ENCODE measurements at regions of chr22 and their contacts with region 1.

Region 1: GRCh38 chr22:31290494-31291471 is 1.5 kb downstream of the PIK3IP1 start:
- DNase-seq: peak; percentile 96 to 97
- H3K4me3 ChIP-seq: peak overlapping the region; percentile 66 to 85
- H3K27ac ChIP-seq: peak overlapping the region; percentile 85 to 95
- H3K4me1 ChIP-seq: peaks cover 0 to 53% (median 31%) of the 10 kb centered on the region in 4 donors
- H3K27me3 ChIP-seq: no peaks in the 10 kb centered on the region
- CTCF ChIP-seq: no peak

Region 2: GRCh38 chr22:29987137-29987536 is 1303.6 kb before region 1 on chr22:
- intact Hi-C with region 1: loop called (anchors 5 kb)
- DNase-seq: no peak
- H3K4me3 ChIP-seq: no peak overlapping the region
- H3K27ac ChIP-seq: no peak overlapping the region
- H3K4me1 ChIP-seq: no peaks in the 10 kb centered on the region
- H3K27me3 ChIP-seq: no peaks in the 10 kb centered on the region
- CTCF ChIP-seq: no peak

Region 3: GRCh38 chr22:31211862-31212730 is 78.7 kb before region 1 on chr22 and contains the start of gene LIMK2:
- intact Hi-C with region 1: no loop called
- DNase-seq: peak; percentile 91 to 95
- H3K4me3 ChIP-seq: peak within 1 kb of the TSS; percentile 74 to 93
- H3K27ac ChIP-seq: peak within 1 kb of the TSS; percentile 67 to 69
- H3K4me1 ChIP-seq: peaks cover 0 to 25% (median 19%) of the 10 kb centered on the region in 4 donors
- H3K27me3 ChIP-seq: no peaks in the 10 kb centered on the region
- CTCF ChIP-seq: peak; percentile 56 to 86

Region 4: GRCh38 chr22:31345331-31346254 is 54.8 kb after region 1 on chr22:
- intact Hi-C with region 1: loop called (anchors 10 kb)
- DNase-seq: peak; percentile 77 to 88
- H3K4me3 ChIP-seq: peak overlapping the region; percentile 75 to 87
- H3K27ac ChIP-seq: peak overlapping the region; percentile 81 to 85
- H3K4me1 ChIP-seq: peaks cover 0 to 56% (median 35%) of the 10 kb centered on the region in 4 donors
- H3K27me3 ChIP-seq: no peaks in the 10 kb centered on the region
- CTCF ChIP-seq: peak; percentile 86 to 96

Measured in tibial artery (tissue), 4 donors.